ENCODE measurements at regions of chr12 and their contacts with region 1.

Region 1: DNA sequence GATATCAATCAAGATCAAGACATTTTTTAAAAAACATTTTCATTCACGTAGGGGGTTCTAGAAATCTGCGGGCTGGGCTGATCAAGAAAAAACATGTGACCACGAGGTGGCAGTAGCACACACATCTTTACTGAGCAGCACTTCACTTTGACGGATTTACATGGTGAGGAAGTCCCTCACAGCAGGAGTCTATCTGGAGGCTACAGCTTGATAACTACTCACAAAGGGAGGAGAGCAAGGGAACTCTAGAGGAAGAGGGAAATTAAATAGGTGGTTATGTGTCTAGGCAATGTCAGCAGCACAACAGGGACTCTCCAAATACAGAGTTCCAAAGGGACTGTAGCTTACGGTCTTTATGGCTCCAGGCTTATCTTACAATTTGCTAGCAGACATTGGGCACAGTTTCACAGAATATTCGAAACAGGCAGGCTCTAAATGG is 248.1 kb downstream of the DPY19L2 start:
- DNase-seq: peak; percentile 59
- ATAC-seq: peak; percentile 94
- H3K4me3 ChIP-seq: no peak overlapping the region
- H3K27ac ChIP-seq: no peak overlapping the region
- H3K4me1 ChIP-seq: no peaks in the 10 kb centered on the region
- H3K27me3 ChIP-seq: no peaks in the 10 kb centered on the region; the same call in 1 of the 2 replicates
- CTCF ChIP-seq: peak; percentile 59
- POLR2A ChIP-seq: no peak
- RAD21 ChIP-seq: peak; percentile 54

Region 2: DNA sequence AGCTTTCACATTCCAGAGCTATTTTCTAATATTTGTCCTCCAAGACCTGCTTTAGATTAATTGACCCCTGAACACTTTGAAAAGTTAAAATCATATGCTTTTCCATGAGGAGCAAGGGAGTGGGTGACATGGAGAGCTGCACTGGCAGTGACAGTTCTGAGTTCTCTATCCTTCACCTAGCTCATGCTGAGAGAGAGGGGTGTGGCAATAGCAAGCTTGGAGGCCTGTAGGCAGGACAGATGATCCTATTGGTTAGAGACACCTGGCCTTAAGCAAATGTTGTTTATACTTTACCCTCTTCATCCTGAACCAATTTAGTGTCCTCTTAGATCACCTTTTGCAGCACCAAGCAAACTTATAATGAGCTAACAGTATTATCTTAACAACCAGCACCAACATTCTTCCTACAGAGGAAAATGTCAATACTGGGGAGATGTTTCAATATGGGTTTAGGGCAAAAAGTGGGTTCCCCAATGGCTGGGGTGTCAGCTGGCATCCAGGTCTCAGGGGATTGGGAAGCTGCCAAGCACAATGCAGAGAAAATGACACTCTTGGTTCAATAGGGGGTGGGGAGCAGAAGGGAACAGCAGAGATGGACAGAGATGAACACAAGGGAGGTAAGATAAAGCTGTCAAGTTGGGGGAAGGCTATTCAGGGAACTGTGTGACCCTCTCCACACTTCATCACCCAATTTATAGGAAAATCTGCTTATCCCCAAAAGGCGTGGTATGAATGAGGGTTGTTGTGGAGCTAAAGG is 448.3 kb before region 1 on chr12:
- CTCF ChIA-PET with region 1: no interaction called
- POLR2A ChIA-PET with region 1: no interaction called
- dilution Hi-C with region 1: no loop called
- in situ Hi-C with region 1: no loop called
- intact Hi-C with region 1: no loop called
- DNase-seq: no peak
- ATAC-seq: no peak
- H3K4me3 ChIP-seq: no peak overlapping the region
- H3K27ac ChIP-seq: no peak overlapping the region
- H3K4me1 ChIP-seq: no peaks in the 10 kb centered on the region
- H3K27me3 ChIP-seq: no peaks in the 10 kb centered on the region; the same call in 1 of the 2 replicates
- CTCF ChIP-seq: no peak
- POLR2A ChIP-seq: no peak
- RAD21 ChIP-seq: no peak

Region 3: GRCh38 chr12:63103494-63104131 is 316.6 kb before region 1 on chr12:
- CTCF ChIA-PET with region 1: no interaction called
- POLR2A ChIA-PET with region 1: no interaction called
- dilution Hi-C with region 1: no loop called
- in situ Hi-C with region 1: no loop called
- intact Hi-C with region 1: loop called (anchors 2 kb)
- DNase-seq: peak; percentile 23
- ATAC-seq: no peak; the same call in 1 of the 2 replicates
- H3K4me3 ChIP-seq: no peak overlapping the region
- H3K27ac ChIP-seq: no peak overlapping the region
- H3K4me1 ChIP-seq: no peaks in the 10 kb centered on the region
- H3K27me3 ChIP-seq: no peaks in the 10 kb centered on the region
- CTCF ChIP-seq: peak; percentile 61
- POLR2A ChIP-seq: no peak
- RAD21 ChIP-seq: peak; percentile 61

Region 4: DNA sequence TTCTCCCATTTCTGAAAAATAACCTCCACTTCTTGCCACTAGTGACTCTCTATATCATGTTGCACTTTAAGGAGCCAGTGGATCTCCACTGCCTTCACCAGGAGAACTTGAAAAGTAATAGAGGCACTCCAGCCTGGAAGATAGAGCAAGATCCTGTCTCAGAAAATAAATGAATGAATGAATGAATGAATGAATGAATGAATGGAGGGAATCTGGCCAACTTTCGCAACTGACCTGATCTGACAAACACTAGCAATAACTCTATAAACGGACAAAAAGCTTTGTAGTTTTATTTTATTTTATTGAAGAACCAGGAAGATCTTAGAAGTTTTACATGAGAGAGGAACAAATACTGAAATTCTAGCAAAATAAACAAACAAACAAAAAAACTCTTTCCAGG is 159.5 kb before region 1 on chr12:
- CTCF ChIA-PET with region 1: no interaction called
- POLR2A ChIA-PET with region 1: no interaction called
- dilution Hi-C with region 1: no loop called
- in situ Hi-C with region 1: no loop called
- intact Hi-C with region 1: no loop called
- DNase-seq: no peak
- ATAC-seq: no peak
- H3K4me3 ChIP-seq: no peak overlapping the region
- H3K27ac ChIP-seq: no peak overlapping the region
- H3K4me1 ChIP-seq: no peaks in the 10 kb centered on the region
- H3K27me3 ChIP-seq: no peaks in the 10 kb centered on the region
- CTCF ChIP-seq: no peak
- POLR2A ChIP-seq: no peak
- RAD21 ChIP-seq: no peak

Region 5: DNA sequence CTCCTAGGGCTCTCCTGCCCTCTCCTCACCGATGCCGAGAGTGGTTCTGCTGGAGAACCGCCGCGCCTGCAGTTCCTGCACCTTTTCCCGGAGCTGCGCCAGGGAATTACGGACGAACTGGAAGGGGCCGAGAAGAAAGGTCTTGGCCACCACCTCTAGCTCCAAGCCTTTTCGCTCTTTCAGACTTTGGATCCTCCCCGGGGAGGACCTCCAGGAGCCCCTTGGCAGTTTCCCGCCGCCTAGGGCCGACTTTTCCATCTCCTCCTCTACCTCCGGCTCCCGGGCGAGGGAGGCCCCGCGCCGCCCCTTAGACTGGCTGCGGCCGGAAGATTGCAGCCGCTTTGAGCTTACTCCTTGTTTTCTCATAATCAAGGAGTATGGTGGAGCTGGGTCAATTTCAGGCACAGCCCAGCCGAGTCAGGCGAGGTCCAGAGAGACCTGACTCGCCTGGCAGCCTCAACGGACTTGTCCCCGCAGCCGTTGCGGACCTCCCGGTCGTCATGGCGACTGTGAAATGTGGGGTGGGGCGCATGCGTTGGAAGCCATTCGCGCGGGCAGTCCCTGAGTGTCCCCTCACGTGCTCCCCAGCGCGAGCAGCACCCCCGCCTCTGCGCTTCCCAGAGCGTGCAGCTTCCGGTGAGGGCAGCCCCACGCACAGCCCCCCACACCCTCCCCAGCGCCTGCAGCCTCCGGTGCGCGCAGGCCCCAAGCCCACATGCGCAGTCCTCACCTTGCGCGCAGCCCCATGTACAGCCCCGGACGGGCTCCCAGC is 248.0 kb after region 1 on chr12 and contains the start of gene DPY19L2:
- CTCF ChIA-PET with region 1: no interaction called
- POLR2A ChIA-PET with region 1: no interaction called
- dilution Hi-C with region 1: no loop called
- in situ Hi-C with region 1: no loop called
- intact Hi-C with region 1: loop called (anchors 2 kb)
- DNase-seq: peak; percentile 52
- ATAC-seq: peak; percentile 90
- H3K4me3 ChIP-seq: peak within 1 kb of the TSS; percentile 97
- H3K27ac ChIP-seq: peak within 1 kb of the TSS; percentile 43
- H3K4me1 ChIP-seq: no peaks in the 10 kb centered on the region
- H3K27me3 ChIP-seq: no peaks in the 10 kb centered on the region
- CTCF ChIP-seq: no peak
- POLR2A ChIP-seq: no peak
- RAD21 ChIP-seq: no peak
- total RNA-seq, gene DPY19L2: 0.90 and 1.4 TPM in 2 replicates

Region 6: DNA sequence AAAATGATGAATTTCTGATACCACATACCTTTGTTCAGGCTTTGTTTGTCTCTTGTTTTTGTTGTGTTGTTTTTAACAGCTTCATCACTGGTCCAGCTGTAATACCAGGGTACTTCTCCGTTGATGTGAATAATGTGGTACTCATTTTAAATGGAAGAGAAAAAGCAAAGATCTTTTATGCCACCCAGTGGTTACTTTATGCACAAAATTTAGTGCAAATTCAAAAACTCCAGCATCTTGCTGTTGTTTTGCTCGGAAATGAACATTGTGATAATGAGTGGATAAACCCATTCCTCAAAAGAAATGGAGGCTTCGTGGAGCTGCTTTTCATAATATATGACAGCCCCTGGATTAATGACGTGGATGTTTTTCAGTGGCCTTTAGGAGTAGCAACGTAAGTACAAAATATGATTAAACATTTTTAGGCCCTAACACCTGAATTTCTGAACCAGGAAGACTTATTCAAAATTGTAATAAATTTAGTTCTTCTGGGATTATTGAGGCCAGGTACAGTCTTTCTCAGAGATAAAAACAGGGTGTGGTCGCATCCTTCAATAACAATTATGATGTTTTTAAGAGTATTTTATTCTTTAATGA is 381.9 kb after region 1 on chr12:
- CTCF ChIA-PET with region 1: interaction called, 4 read pairs
- POLR2A ChIA-PET with region 1: no interaction called
- dilution Hi-C with region 1: no loop called
- in situ Hi-C with region 1: loop called (anchors 5 kb)
- intact Hi-C with region 1: loop called (anchors 1 kb)
- DNase-seq: peak; percentile 25
- ATAC-seq: peak; percentile 48
- H3K4me3 ChIP-seq: no peak overlapping the region
- H3K27ac ChIP-seq: no peak overlapping the region
- H3K4me1 ChIP-seq: no peaks in the 10 kb centered on the region; the same call in 1 of the 2 replicates
- H3K27me3 ChIP-seq: no peaks in the 10 kb centered on the region
- CTCF ChIP-seq: peak; percentile 63
- POLR2A ChIP-seq: no peak
- RAD21 ChIP-seq: peak; percentile 63

Region 7: DNA sequence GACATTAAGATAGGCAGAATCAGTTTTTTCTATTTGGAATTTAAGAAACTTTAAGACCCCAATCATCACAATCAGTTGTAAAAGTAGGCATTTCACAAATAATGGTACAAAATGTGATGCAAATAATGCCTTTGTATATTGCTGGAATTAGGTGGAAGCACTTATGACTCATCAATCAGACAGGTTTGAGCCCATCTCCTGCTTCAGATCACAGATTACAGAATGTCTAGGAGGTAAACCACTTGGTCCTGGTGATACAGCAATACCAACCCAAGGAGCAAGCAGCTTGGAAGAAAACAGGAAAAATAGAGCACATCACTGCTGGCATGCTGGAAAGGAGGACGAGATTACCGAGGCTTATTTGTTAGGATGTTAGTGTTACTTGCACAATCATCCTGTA is 912.7 kb after region 1 on chr12:
- CTCF ChIA-PET with region 1: no interaction called
- POLR2A ChIA-PET with region 1: no interaction called
- dilution Hi-C with region 1: no loop called
- in situ Hi-C with region 1: loop called (anchors 25 kb)
- intact Hi-C with region 1: no loop called
- DNase-seq: no peak
- ATAC-seq: no peak
- H3K4me3 ChIP-seq: no peak overlapping the region
- H3K27ac ChIP-seq: no peak overlapping the region
- H3K4me1 ChIP-seq: no peaks in the 10 kb centered on the region
- H3K27me3 ChIP-seq: peaks cover 3% of the 10 kb centered on the region
- CTCF ChIP-seq: no peak
- POLR2A ChIP-seq: no peak
- RAD21 ChIP-seq: no peak